H1 (cell line): ENCODE measurements at regions of chr17 and their contacts with region 1.

Region 1: DNA sequence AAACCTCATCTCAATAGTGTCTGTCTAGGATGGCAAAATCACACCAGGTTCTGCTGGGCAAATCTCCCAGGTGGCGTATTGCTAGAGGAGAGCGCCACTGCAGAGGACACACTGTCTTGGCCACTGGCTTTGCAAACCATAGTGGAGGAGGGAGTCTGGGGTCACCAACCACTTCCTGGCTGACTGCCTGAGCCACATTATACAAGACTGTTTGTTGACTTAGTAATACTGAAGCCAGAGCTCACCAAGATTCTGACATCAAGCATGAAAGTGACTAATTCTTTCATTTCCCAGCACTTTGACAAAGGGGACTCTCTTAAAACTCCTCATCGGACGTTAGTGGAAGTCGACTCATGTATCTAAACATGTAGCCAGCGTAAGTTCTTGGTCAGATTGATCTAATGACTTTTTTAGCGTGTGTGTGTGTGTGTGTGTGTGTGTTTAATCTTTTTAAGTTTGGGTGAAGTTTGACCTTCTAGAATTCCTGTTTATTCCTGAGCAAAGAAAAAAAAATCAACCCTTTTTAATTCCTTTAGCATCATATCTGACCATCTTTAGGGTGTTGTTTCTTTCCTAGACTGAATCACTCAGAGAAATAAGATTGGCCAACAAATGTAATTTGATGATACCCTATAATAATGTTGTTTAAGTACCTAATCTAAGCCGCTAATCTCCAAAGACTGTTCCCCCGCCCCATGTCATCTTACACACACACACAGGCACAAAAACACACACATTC is 13.7 kb downstream of the PITPNC1 start:
- DNase-seq: no peak
- H3K4me3 ChIP-seq: no peak overlapping the region
- H3K27ac ChIP-seq: no peak overlapping the region
- H3K4me1 ChIP-seq: no peaks in the 10 kb centered on the region; a peak in 3 of 7 replicates
- H3K27me3 ChIP-seq: no peaks in the 10 kb centered on the region
- CTCF ChIP-seq: no peak
- EP300 ChIP-seq: no peak
- POLR2A ChIP-seq: no peak
- RAD21 ChIP-seq: no peak

Region 2: GRCh38 chr17:67376737-67377487 is 13.9 kb before region 1 on chr17 and contains the start of gene PITPNC1:
- CTCF ChIA-PET with region 1: interaction called, 22 read pairs
- POLR2A ChIA-PET with region 1: interaction called, 5 read pairs
- DNase-seq: peak in 1 of 2 experiments; percentile 89
- H3K4me3 ChIP-seq: peak within 1 kb of the TSS; percentile 80 to 95 (median 91)
- H3K27ac ChIP-seq: peak within 1 kb of the TSS; percentile 77
- H3K4me1 ChIP-seq: peaks cover 2 to 5% (median 4%) of the 10 kb centered on the region in 4 experiments; a peak in 6 of 7 replicates
- H3K27me3 ChIP-seq: no peaks in the 10 kb centered on the region
- CTCF ChIP-seq: no peak
- EP300 ChIP-seq: no peak
- POLR2A ChIP-seq: peak; percentile 70 to 76
- RAD21 ChIP-seq: no peak
- total RNA-seq, gene PITPNC1: 53.8 and 54.7 TPM in 2 replicates

Region 3: GRCh38 chr17:67404256-67404655 is 13.4 kb after region 1 on chr17:
- CTCF ChIA-PET with region 1: no interaction called
- POLR2A ChIA-PET with region 1: no interaction called
- DNase-seq: no peak
- H3K4me3 ChIP-seq: no peak overlapping the region
- H3K27ac ChIP-seq: no peak overlapping the region
- H3K4me1 ChIP-seq: peaks cover 0 to 7% (median 4%) of the 10 kb centered on the region in 4 experiments; a peak in 3 of 7 replicates
- H3K27me3 ChIP-seq: no peaks in the 10 kb centered on the region
- CTCF ChIP-seq: no peak
- EP300 ChIP-seq: no peak
- POLR2A ChIP-seq: no peak
- RAD21 ChIP-seq: no peak

Region 4: GRCh38 chr17:67475236-67475937 is 84.6 kb after region 1 on chr17:
- CTCF ChIA-PET with region 1: interaction called, 63 read pairs
- POLR2A ChIA-PET with region 1: no interaction called
- DNase-seq: peak; percentile 47 to 82
- H3K4me3 ChIP-seq: no peak overlapping the region
- H3K27ac ChIP-seq: no peak overlapping the region
- H3K4me1 ChIP-seq: peaks cover 0 to 20% (median 12%) of the 10 kb centered on the region in 4 experiments; a peak in 6 of 7 replicates
- H3K27me3 ChIP-seq: no peaks in the 10 kb centered on the region
- CTCF ChIP-seq: peak; percentile 84 to 99 (median 96)
- EP300 ChIP-seq: no peak
- POLR2A ChIP-seq: no peak
- RAD21 ChIP-seq: peak; percentile 85 to 89

Region 5: GRCh38 chr17:67610059-67610458 is 219.2 kb after region 1 on chr17:
- CTCF ChIA-PET with region 1: interaction called, 15 read pairs
- POLR2A ChIA-PET with region 1: no interaction called
- DNase-seq: no peak
- H3K4me3 ChIP-seq: no peak overlapping the region
- H3K27ac ChIP-seq: no peak overlapping the region
- H3K4me1 ChIP-seq: peaks cover 0 to 4% (median 0%) of the 10 kb centered on the region in 4 experiments; a peak in 3 of 7 replicates
- H3K27me3 ChIP-seq: no peaks in the 10 kb centered on the region
- CTCF ChIP-seq: no peak
- EP300 ChIP-seq: no peak
- POLR2A ChIP-seq: no peak
- RAD21 ChIP-seq: no peak; a peak in 1 of 4 replicates

Region 6: DNA sequence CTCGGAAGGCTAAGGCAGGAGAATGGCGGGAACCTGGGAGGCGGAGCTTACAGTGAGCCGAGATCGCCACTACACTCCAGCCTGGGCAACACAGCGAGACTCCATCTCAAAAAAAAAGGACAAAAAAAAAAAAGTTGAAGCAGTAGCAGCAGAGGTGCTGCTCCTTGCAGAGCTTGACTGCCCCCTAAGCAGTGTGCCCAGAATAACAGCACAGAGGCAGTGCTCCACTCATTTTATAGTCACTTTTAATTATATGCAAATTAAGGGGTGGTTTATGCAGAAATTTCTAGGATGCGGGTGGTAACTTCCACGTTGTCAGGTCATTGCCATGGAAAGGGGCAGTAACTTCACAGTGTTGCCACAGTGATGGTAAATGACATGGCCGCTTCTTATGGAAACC is 272.6 kb after region 1 on chr17:
- CTCF ChIA-PET with region 1: interaction called, 11 read pairs
- POLR2A ChIA-PET with region 1: no interaction called
- DNase-seq: no peak
- H3K4me3 ChIP-seq: no peak overlapping the region
- H3K27ac ChIP-seq: no peak overlapping the region
- H3K4me1 ChIP-seq: peaks cover 0 to 3% (median 1%) of the 10 kb centered on the region in 4 experiments; a peak in 4 of 7 replicates
- H3K27me3 ChIP-seq: no peaks in the 10 kb centered on the region
- CTCF ChIP-seq: peak in 2 of 3 experiments; percentile 8 to 17; a peak in 2 of 4 replicates
- EP300 ChIP-seq: no peak
- POLR2A ChIP-seq: no peak
- RAD21 ChIP-seq: peak; percentile 27 to 31; a peak in 2 of 4 replicates